Mucosa of descending colon (tissue), 3 donors: ENCODE measurements at regions of chr19 and their contacts with region 1.

Region 1: GRCh38 chr19:23321948-23322549 is 71.9 kb upstream of the ZNF724 start:
- DNase-seq: no peak
- ATAC-seq: no peak
- H3K4me3 ChIP-seq: no peak overlapping the region
- H3K4me1 ChIP-seq: no peaks in the 10 kb centered on the region
- CTCF ChIP-seq: no peak

Region 2: GRCh38 chr19:23470873-23471545 is 149.0 kb after region 1 on chr19:
- intact Hi-C with region 1: loop called in 1 of 2 experiments (anchors 5 kb)
- DNase-seq: peak; percentile 39 to 62 (median 52)
- ATAC-seq: peak; percentile 58
- H3K4me3 ChIP-seq: no peak overlapping the region
- H3K4me1 ChIP-seq: peaks cover 17% of the 10 kb centered on the region
- CTCF ChIP-seq: no peak